HepG2 (cell line): ENCODE measurements at regions of chr14 and their contacts with region 1.

Region 1: GRCh38 chr14:94559638-94560290 is 1.5 kb upstream of the SERPINA4 start:
- DNase-seq: no peak
- ATAC-seq: no peak
- H3K4me3 ChIP-seq: no peak overlapping the region
- H3K27ac ChIP-seq: no peak overlapping the region
- H3K4me1 ChIP-seq: peaks cover 64% of the 10 kb centered on the region
- H3K27me3 ChIP-seq: no peaks in the 10 kb centered on the region
- CTCF ChIP-seq: no peak
- EP300 ChIP-seq: no peak
- POLR2A ChIP-seq: no peak
- RAD21 ChIP-seq: no peak

Region 2: GRCh38 chr14:94372021-94372605 is 187.7 kb before region 1 on chr14:
- CTCF ChIA-PET with region 1: no interaction called
- POLR2A ChIA-PET with region 1: no interaction called
- in situ Hi-C with region 1: no loop called
- intact Hi-C with region 1: no loop called
- DNase-seq: no peak
- ATAC-seq: no peak
- H3K4me3 ChIP-seq: no peak overlapping the region
- H3K27ac ChIP-seq: no peak overlapping the region
- H3K4me1 ChIP-seq: peaks cover 100% of the 10 kb centered on the region
- H3K27me3 ChIP-seq: no peaks in the 10 kb centered on the region
- CTCF ChIP-seq: peak; percentile 70
- EP300 ChIP-seq: no peak
- POLR2A ChIP-seq: no peak
- RAD21 ChIP-seq: 0 out of 2 replicates have a peak, but pooled peaks have one; percentile 27

Region 3: GRCh38 chr14:94571950-94572349 is 12.2 kb after region 1 on chr14:
- CTCF ChIA-PET with region 1: no interaction called
- POLR2A ChIA-PET with region 1: interaction called, 48 read pairs
- in situ Hi-C with region 1: no loop called
- intact Hi-C with region 1: no loop called
- DNase-seq: peak; percentile 37
- ATAC-seq: peak; percentile 7; the same call in 2 of the 3 replicates
- H3K4me3 ChIP-seq: no peak overlapping the region
- H3K27ac ChIP-seq: peak overlapping the region; percentile 94
- H3K4me1 ChIP-seq: peaks cover 89% of the 10 kb centered on the region
- H3K27me3 ChIP-seq: no peaks in the 10 kb centered on the region
- CTCF ChIP-seq: no peak
- EP300 ChIP-seq: no peak
- POLR2A ChIP-seq: no peak
- RAD21 ChIP-seq: no peak

Region 4: DNA sequence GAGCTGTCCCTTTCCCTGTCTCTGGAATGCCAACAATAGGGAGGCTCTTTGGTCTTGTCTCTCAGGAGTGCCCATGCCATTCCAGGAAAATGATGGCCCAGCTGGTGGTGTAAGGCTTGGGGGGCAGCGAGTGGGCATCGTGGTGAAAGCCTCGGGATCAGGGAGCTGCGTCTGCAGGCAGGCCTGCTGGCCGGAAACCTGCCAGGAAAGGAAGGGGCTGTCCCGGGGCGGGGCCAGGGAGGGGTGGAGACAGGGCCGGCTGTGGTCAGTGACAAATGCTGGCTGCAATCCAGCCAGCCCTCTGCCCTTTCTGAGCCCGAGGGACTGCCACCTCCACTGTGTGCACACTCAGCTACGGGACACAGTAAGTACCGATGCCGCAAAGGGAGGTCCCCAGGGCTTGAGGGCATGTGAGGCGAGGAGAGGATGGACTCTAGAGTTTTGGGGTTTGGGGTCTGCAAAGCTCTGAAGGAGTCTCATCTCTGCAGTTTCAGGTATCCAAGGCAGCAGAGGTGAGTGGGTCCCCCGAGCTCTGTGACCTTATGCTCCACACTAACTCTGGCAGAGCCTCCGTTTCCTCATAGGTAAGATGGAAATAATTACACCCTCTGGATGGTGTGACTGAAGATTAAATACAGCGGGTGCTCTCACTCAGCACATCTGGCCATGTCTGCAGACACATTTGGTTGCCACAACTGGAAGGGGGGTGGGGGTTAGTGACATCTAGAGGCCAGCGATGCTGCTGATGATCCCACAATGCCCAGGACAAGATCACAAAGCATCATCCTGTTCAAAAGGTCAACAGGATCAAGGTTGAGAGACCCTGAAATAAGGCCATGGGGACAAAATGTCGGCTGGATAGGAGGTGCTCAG is 21.6 kb after region 1 on chr14 and contains the start of gene SERPINA5:
- CTCF ChIA-PET with region 1: no interaction called
- POLR2A ChIA-PET with region 1: interaction called, 37 read pairs
- in situ Hi-C with region 1: no loop called
- intact Hi-C with region 1: no loop called
- DNase-seq: peak; percentile 83
- ATAC-seq: peak; percentile 95
- H3K4me3 ChIP-seq: peak within 1 kb of the TSS; percentile 61 to 88 (median 75)
- H3K27ac ChIP-seq: peak within 1 kb of the TSS; percentile 88
- H3K4me1 ChIP-seq: peaks cover 75% of the 10 kb centered on the region
- H3K27me3 ChIP-seq: no peaks in the 10 kb centered on the region; a peak in 1 of 5 replicates
- CTCF ChIP-seq: peak; percentile 54
- EP300 ChIP-seq: peak in 1 of 2 experiments; percentile 46; a peak in 2 of 4 replicates
- POLR2A ChIP-seq: peak; percentile 83 to 92
- RAD21 ChIP-seq: peak; percentile 37; the same call in 1 of the 2 replicates
- total RNA-seq, gene SERPINA5: 237 and 498 TPM in 2 replicates